ENCODE measurements at regions of chr4 and their contacts with region 1.

Region 1: GRCh38 chr4:10535912-10536311 is 78.7 kb upstream of the ZNF518B start:
- DNase-seq: no peak
- H3K4me3 ChIP-seq: no peak overlapping the region
- H3K27ac ChIP-seq: no peak overlapping the region
- H3K4me1 ChIP-seq: no peaks in the 10 kb centered on the region
- H3K27me3 ChIP-seq: no peaks in the 10 kb centered on the region
- CTCF ChIP-seq: no peak

Region 2: DNA sequence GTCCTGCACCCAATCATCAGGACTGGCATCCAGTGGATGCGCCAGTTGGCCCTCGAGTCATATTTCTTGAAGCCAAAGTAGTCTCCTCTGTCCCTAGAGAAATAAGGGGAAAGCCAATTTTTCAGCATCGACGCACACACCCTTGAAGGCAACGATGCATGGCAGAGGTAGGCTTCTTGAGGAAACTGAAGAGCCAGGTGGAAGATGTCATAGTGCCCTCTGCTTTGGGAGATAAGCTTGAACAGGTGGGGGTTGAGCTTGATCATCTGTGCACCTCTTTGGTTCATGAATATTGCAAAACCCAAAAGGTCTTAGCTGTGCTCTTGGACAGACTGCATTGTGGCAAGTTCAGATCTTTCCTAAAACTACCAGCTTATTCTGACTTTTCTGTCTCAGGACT is 384.7 kb before region 1 on chr4:
- CTCF ChIA-PET with region 1: no interaction called
- dilution Hi-C with region 1: loop called (anchors 5 kb)
- in situ Hi-C with region 1: no loop called
- intact Hi-C with region 1: loop called (anchors 2 kb)
- DNase-seq: no peak
- H3K4me3 ChIP-seq: no peak overlapping the region
- H3K27ac ChIP-seq: no peak overlapping the region
- H3K4me1 ChIP-seq: no peaks in the 10 kb centered on the region
- H3K27me3 ChIP-seq: no peaks in the 10 kb centered on the region
- CTCF ChIP-seq: no peak

Region 3: GRCh38 chr4:10157478-10158332 is 378.2 kb before region 1 on chr4:
- CTCF ChIA-PET with region 1: interaction called, 10 read pairs
- dilution Hi-C with region 1: loop called (anchors 5 kb)
- in situ Hi-C with region 1: loop called in 1 of 2 experiments (anchors 10 kb)
- intact Hi-C with region 1: loop called (anchors 2 kb)
- DNase-seq: peak; percentile 71
- H3K4me3 ChIP-seq: no peak overlapping the region
- H3K27ac ChIP-seq: no peak overlapping the region
- H3K4me1 ChIP-seq: peaks cover 14% of the 10 kb centered on the region
- H3K27me3 ChIP-seq: no peaks in the 10 kb centered on the region
- CTCF ChIP-seq: peak; percentile 85 to 91

Region 4: DNA sequence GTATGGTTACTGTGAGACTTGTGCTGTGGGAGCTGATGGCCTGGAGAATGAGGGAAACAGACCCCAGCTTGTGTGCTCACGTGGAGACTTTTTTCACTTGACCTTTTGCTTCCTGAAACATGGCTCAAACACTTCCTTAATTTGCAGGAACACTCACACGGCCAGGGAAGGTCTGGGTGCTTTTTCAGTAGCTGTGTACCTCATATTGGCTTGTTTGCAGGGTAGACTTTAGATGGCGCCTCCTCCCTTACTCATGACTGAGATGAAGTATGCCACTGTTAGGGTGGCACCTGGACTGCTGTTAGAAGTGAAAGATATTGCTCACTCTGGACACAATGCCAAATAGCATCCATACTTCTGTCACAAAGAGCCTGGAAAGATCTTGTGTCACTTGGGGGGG is 343.6 kb before region 1 on chr4:
- CTCF ChIA-PET with region 1: no interaction called
- dilution Hi-C with region 1: no loop called
- in situ Hi-C with region 1: no loop called
- intact Hi-C with region 1: loop called (anchors 1 kb)
- DNase-seq: peak; percentile 46
- H3K4me3 ChIP-seq: no peak overlapping the region
- H3K27ac ChIP-seq: no peak overlapping the region
- H3K4me1 ChIP-seq: no peaks in the 10 kb centered on the region
- H3K27me3 ChIP-seq: no peaks in the 10 kb centered on the region
- CTCF ChIP-seq: peak; percentile 35 to 66

Region 5: DNA sequence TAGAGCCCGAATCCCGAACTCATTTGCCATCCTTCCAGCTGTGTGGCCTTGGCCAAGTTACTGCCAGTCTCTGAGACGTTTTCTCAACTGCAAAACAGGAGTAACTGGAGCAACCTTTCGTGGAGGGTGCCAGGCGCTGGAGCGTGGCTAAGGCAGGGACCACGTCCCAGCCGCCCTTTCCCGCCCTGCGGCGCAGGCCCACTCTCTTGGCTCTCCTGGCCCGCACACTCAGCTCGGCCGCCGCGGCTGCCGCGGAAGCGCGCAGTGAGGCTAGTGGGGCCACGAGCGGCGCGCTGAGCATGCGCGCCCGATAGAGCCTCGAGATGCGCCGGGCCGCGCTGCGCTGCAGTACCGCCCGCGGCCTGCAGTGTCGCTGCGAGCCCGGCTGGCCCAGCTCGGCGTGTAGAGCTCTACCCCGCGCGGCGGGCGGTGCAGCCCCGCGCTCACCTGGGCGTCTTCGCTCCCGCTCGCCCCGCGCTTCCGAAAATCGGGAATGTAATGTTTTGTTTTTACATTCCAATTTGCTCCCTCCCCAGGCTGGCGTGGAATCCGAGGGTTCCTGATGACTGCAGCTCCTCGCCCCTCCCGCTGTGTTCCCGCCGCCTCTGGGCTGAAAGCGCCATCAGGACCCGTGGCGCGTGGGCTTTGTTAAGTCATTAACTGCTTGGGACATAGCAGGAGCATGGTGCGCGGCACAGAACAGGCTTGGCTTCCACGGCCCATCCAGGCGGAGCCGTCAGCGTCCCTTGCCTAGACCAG is 74.6 kb before region 1 on chr4:
- CTCF ChIA-PET with region 1: interaction called, 3 read pairs
- dilution Hi-C with region 1: no loop called
- in situ Hi-C with region 1: no loop called
- intact Hi-C with region 1: loop called (anchors 2 kb)
- DNase-seq: peak; percentile 60
- H3K4me3 ChIP-seq: no peak overlapping the region
- H3K27ac ChIP-seq: no peak overlapping the region
- H3K4me1 ChIP-seq: peaks cover 5% of the 10 kb centered on the region
- H3K27me3 ChIP-seq: peaks cover 6% of the 10 kb centered on the region
- CTCF ChIP-seq: peak; percentile 36 to 40